ENCODE measurements at regions of chr15 and their contacts with region 1.

Region 1: DNA sequence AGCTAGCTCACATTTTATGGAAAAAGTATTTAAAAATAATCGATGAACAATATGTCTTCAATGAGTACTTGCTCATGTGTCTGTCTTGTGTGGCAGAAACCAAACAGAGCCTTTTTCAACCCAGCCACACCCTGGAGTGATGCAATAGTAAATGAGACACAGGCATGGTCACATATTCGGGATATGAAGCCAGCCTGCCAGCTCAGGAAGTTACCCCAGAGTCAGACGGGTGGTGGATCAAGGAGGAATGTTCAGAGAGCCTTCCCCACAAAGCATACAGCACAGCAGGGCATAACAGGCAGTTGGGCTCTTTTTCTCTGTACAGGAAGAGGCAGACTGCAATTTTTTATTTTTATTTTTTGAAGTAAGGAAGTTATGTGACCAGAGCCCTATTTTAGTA is 27.3 kb downstream of the LARP6 start:
- DNase-seq: peak; percentile 91
- H3K4me3 ChIP-seq: no peak overlapping the region
- H3K27ac ChIP-seq: peak overlapping the region; percentile 65
- H3K4me1 ChIP-seq: peaks cover 18% of the 10 kb centered on the region
- H3K27me3 ChIP-seq: no peaks in the 10 kb centered on the region
- CTCF ChIP-seq: no peak

Region 2: GRCh38 chr15:70765504-70766281 is 60.9 kb before region 1 on chr15:
- CTCF ChIA-PET with region 1: no interaction called
- dilution Hi-C with region 1: no loop called
- in situ Hi-C with region 1: no loop called
- intact Hi-C with region 1: no loop called
- DNase-seq: no peak
- H3K4me3 ChIP-seq: no peak overlapping the region
- H3K27ac ChIP-seq: no peak overlapping the region
- H3K4me1 ChIP-seq: peaks cover 16% of the 10 kb centered on the region
- H3K27me3 ChIP-seq: no peaks in the 10 kb centered on the region
- CTCF ChIP-seq: no peak

Region 3: DNA sequence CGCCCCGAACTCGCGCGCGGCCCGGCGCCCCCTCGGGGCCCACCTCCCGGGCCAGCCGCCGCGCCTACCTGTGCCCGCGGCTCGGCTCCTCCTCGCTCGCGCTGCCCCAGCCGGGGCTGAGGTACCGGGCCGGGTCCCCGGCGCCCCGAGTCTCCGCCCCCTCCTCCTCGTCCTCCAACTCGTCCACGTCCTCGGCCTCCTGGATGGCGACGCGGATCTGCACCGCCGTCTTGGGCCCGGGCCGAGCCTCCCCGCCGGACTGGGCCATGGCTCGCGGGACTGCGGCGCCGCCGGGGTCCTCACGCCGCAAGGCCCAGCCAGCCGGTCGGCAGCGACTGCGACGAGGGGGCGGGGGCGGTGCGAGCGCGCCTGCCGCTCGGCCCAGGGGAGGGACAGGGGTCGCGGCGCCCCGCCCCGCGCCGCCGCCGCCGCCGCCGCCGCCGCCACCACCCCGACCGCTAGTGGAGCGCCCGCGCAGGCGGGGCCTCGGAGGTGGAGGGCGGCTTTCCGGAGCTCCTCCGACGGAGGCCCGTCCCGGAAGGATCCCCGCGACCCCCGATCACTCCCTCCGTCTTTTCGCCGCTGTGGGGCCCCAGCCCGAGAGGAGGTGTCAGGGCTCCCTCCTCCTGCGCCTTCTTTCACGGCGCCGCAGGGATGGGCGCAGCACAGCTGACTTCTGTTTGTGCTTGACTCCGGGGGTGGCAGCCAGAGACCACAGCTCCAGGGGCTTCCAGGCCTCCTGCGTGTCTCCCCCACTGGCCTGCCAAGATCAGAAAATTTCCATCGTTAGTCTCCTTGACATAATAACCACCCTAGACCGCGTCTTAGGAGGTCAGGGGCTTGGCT is 27.4 kb after region 1 on chr15 and contains the start of gene LARP6:
- CTCF ChIA-PET with region 1: no interaction called
- dilution Hi-C with region 1: no loop called
- in situ Hi-C with region 1: no loop called
- intact Hi-C with region 1: loop called (anchors 1 kb)
- DNase-seq: peak; percentile 22
- H3K4me3 ChIP-seq: peak within 1 kb of the TSS; percentile 66 to 87 (median 83)
- H3K27ac ChIP-seq: peak within 1 kb of the TSS; percentile 83
- H3K4me1 ChIP-seq: peaks cover 36% of the 10 kb centered on the region
- H3K27me3 ChIP-seq: no peaks in the 10 kb centered on the region
- CTCF ChIP-seq: no peak
- total RNA-seq, gene LARP6: 37.5 to 77.3 TPM

Region 4: DNA sequence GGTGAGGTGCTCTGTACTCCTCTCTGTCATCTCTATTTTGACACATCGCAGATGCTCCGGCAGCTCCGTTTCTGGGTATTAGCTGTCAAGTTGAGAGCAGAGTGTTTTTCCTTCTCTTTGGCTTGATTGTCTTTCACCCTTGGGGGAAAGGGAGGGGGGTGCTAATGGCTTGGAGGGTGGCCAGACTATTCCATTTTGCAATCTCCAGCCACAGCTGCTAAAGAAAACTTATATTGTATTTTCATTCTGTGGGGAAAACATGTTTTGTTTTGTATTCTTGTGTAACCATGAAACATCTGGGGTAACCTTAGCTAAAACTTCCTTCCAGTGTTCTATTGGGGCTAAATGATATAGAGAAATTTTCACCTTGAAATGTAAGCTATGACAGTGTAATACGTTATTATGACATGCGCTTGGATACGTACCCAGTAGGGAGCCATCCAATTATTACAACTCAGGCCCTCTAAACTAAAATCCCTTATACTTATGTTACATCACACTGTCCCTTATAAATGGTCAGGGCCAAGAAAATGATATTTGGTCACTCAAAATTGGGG is 41.4 kb after region 1 on chr15:
- CTCF ChIA-PET with region 1: no interaction called
- dilution Hi-C with region 1: no loop called
- in situ Hi-C with region 1: loop called in 1 of 2 experiments (anchors 5 kb)
- intact Hi-C with region 1: no loop called
- DNase-seq: peak; percentile 77
- H3K4me3 ChIP-seq: no peak overlapping the region
- H3K27ac ChIP-seq: peak overlapping the region; percentile 5
- H3K4me1 ChIP-seq: peaks cover 36% of the 10 kb centered on the region
- H3K27me3 ChIP-seq: no peaks in the 10 kb centered on the region
- CTCF ChIP-seq: no peak

Measured in mammary epithelial cell (primary cell).